Activated naive CD4-positive, alpha-beta T cell treated with anti-CD3 and anti-CD28 coated beads for 36 hours (primary cell): ENCODE measurements at regions of chr5 and their contacts with region 1.

Region 1: GRCh38 chr5:112860929-112861637 is at the start of gene SRP19:
- DNase-seq: peak; percentile 96
- H3K4me3 Mint-ChIP-seq: peak within 1 kb of the TSS; percentile 96
- H3K27ac Mint-ChIP-seq: peak within 1 kb of the TSS; percentile 95
- H3K4me1 Mint-ChIP-seq: peaks cover 30% of the 10 kb centered on the region
- H3K27me3 Mint-ChIP-seq: peaks cover 9% of the 10 kb centered on the region
- total RNA-seq, gene SRP19: 43.7 to 49.6 TPM

Region 2: GRCh38 chr5:112737463-112738190 is 123.5 kb before region 1 on chr5 and contains the start of gene APC:
- CTCF ChIA-PET with region 1: no interaction called
- intact Hi-C with region 1: no loop called
- DNase-seq: peak; percentile 92
- H3K4me3 Mint-ChIP-seq: peak within 1 kb of the TSS; percentile 95
- H3K27ac Mint-ChIP-seq: no peak within 1 kb of the TSS
- H3K4me1 Mint-ChIP-seq: peaks cover 18% of the 10 kb centered on the region
- H3K27me3 Mint-ChIP-seq: no peaks in the 10 kb centered on the region
- total RNA-seq, gene APC: 15.6 to 17.2 TPM

Region 3: GRCh38 chr5:112848116-112848811 is 12.8 kb before region 1 on chr5:
- CTCF ChIA-PET with region 1: interaction called, 12 read pairs
- intact Hi-C with region 1: no loop called
- DNase-seq: no peak
- H3K4me3 Mint-ChIP-seq: no peak overlapping the region
- H3K27ac Mint-ChIP-seq: no peak overlapping the region
- H3K4me1 Mint-ChIP-seq: peaks cover 3% of the 10 kb centered on the region
- H3K27me3 Mint-ChIP-seq: peaks cover 3% of the 10 kb centered on the region

Region 4: GRCh38 chr5:112878760-112879159 is 17.7 kb after region 1 on chr5:
- CTCF ChIA-PET with region 1: interaction called, 5 read pairs
- intact Hi-C with region 1: loop called (anchors 1 kb)
- DNase-seq: peak; percentile 80
- H3K4me3 Mint-ChIP-seq: no peak overlapping the region
- H3K27ac Mint-ChIP-seq: peak overlapping the region; percentile 71
- H3K4me1 Mint-ChIP-seq: peaks cover 27% of the 10 kb centered on the region
- H3K27me3 Mint-ChIP-seq: no peaks in the 10 kb centered on the region